Heart right ventricle (tissue), 16 donors: ENCODE measurements at regions of chr1 and their contacts with region 1.

Region 1: DNA sequence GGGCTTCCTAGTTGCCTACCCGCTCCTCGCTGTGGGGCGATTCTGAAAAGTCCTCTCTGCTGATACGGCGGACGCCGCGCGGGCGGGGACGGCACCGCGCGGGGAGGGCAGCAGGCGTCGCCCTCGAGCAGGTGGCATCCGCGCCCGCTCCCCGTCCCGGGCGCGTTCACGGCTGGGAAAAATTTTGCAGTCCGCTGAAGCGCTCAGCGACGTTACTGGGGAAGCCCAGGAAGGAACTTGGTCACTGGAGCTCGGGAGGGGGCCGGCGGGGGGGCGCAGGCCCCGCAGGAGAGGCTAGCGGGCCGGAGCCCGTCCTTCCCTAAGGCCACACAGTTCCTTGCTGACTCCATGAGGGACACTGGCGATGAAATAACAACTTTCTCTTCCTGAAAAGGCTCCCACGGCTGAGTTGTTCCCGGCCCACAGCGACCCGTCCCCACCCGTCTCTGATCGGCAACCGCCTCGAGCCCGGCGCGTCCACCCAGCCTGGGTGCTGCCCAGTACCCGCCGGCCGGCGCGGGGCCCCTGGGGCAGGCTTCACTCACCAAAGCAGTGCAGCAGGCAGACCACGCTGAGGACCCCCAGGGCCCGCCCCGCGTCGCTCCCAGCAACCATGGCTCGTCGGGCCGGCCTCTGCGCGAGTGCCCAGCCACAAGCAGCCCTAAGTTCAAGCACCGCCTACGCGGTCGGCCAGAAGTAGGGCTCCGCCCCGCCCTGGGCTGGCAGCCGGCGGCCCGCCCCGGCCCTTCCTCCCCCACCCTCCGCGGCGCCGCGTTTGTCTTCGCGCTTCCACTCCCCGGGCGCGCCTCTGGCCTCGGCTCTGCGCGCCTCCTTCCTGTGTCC is at the start of gene CD58:
- DNase-seq: peak; percentile 92 to 93
- ATAC-seq: peak; percentile 92 to 96 (median 92)
- H3K4me3 ChIP-seq: peak within 1 kb of the TSS; percentile 67 to 97 (median 88)
- H3K27ac ChIP-seq: peak within 1 kb of the TSS; percentile 91 to 100 (median 98)
- H3K4me1 ChIP-seq: peaks cover 15 to 81% (median 61%) of the 10 kb centered on the region in 9 donors
- H3K27me3 ChIP-seq: no peaks in the 10 kb centered on the region
- CTCF ChIP-seq: peak; percentile 57 to 85 (median 70)
- total RNA-seq, gene CD58: 17.2 to 41.1 (median 26.5) TPM

Region 2: DNA sequence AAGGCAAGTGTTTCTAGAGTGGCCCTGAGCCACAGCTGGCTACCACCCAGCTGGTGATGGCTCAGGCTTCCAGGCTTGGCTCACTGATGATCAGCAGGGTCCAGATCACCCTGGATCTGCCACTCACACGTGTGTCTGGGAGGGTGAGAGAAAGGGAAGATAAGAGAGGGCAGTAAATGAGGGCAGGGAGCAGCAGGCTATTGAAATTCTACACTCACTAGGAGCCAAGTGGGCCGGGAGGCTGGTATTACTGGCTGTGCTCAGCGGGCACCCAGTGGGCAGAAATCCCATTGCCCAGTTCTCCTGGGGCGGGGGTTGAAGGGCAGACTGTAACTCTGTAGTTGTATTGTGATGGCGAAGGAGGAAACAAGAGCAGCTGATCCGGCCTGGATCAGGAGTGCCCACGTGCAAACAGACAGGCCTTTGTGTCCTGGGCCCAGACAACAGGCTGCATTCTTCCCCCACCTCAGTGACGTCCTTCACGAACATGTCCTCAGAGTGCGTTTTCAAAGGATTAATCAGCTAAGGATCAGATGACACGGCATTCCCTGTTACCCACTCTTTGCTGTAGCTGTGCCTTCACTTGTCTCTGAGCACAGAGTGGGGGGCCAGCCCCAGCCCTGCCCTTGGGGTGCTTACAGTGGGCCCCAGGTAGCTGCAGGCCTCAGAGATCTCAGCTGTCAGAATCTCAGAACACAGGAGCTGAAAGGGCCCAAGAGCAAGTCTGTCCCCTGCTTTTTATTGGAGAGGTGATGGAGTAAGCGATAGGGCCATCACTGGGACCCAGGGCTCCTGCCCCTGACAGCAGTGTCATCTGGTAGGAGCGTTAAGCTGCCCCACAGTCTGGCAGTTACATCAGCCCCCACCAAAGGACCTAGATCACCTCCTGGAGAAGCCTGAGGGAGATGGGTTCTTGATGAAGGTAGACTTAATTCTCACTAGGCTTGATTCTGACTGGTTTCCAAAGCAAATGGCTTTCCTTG is 137.0 kb before region 1 on chr1:
- intact Hi-C with region 1: no loop called
- DNase-seq: peak; percentile 66 to 69
- ATAC-seq: peak; percentile 82 to 95 (median 88)
- H3K4me3 ChIP-seq: no peak overlapping the region
- H3K27ac ChIP-seq: peak overlapping the region; percentile 23 to 86 (median 74)
- H3K4me1 ChIP-seq: peaks cover 0 to 25% (median 12%) of the 10 kb centered on the region in 9 donors
- H3K27me3 ChIP-seq: no peaks in the 10 kb centered on the region
- CTCF ChIP-seq: no peak

Region 3: DNA sequence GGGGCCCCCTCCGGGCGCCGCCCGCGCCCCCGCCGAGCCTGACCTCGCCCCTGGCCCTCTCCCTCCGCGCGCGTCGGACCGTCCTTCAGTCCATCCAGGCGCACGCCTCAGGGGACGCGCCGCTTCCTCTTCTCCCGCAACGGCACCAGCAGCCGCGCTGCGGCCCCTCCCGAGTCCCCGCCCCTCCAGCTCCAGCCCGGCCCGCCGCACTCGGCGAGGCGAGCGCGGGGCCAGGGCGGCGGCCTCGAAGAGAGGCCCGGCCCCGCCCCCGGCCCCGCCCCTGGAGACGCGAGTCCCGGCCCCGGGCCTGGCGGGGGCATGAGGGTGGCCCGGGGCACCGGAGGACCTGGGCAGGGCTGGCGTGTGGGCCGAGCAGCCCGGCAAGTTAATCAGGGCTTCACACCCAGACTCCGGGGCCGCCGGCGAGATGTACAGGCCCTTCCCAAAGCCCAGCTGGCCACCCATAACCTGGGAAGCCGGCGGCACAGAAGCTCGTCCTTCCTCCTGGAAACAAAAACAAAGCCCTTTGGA is 97.1 kb after region 1 on chr1 and contains the start of gene IGSF3:
- intact Hi-C with region 1: loop called in 9 of 10 experiments (anchors 2 to 10 kb)
- DNase-seq: peak; percentile 65 to 86
- ATAC-seq: peak; percentile 65 to 93 (median 85)
- H3K4me3 ChIP-seq: peak within 1 kb of the TSS; percentile 49 to 88 (median 71)
- H3K27ac ChIP-seq: peak within 1 kb of the TSS in 8 of 10 donors; percentile 25 to 65 (median 54)
- H3K4me1 ChIP-seq: peaks cover 0 to 21% (median 13%) of the 10 kb centered on the region in 9 donors
- H3K27me3 ChIP-seq: peaks cover 0 to 54% (median 0%) of the 10 kb centered on the region in 7 donors
- CTCF ChIP-seq: no peak
- total RNA-seq, gene IGSF3: 8.8 to 21.2 (median 14.9) TPM

Region 4: GRCh38 chr1:116679091-116679827 is 108.7 kb after region 1 on chr1:
- intact Hi-C with region 1: loop called in 6 of 10 experiments (anchors 5 to 10 kb)
- DNase-seq: no peak
- ATAC-seq: no peak
- H3K4me3 ChIP-seq: no peak overlapping the region
- H3K27ac ChIP-seq: no peak overlapping the region
- H3K4me1 ChIP-seq: no peaks in the 10 kb centered on the region
- H3K27me3 ChIP-seq: peaks cover 0 to 10% (median 0%) of the 10 kb centered on the region in 7 donors
- CTCF ChIP-seq: no peak

Region 5: GRCh38 chr1:117026361-117026760 is 455.8 kb after region 1 on chr1:
- intact Hi-C with region 1: no loop called
- DNase-seq: no peak
- ATAC-seq: peak in 2 of 8 donors; percentile 35 to 67
- H3K4me3 ChIP-seq: no peak overlapping the region
- H3K27ac ChIP-seq: peak overlapping the region in 1 of 10 donors; percentile 19
- H3K4me1 ChIP-seq: peaks cover 0 to 14% (median 4%) of the 10 kb centered on the region in 9 donors
- H3K27me3 ChIP-seq: no peaks in the 10 kb centered on the region
- CTCF ChIP-seq: no peak

Region 6: DNA sequence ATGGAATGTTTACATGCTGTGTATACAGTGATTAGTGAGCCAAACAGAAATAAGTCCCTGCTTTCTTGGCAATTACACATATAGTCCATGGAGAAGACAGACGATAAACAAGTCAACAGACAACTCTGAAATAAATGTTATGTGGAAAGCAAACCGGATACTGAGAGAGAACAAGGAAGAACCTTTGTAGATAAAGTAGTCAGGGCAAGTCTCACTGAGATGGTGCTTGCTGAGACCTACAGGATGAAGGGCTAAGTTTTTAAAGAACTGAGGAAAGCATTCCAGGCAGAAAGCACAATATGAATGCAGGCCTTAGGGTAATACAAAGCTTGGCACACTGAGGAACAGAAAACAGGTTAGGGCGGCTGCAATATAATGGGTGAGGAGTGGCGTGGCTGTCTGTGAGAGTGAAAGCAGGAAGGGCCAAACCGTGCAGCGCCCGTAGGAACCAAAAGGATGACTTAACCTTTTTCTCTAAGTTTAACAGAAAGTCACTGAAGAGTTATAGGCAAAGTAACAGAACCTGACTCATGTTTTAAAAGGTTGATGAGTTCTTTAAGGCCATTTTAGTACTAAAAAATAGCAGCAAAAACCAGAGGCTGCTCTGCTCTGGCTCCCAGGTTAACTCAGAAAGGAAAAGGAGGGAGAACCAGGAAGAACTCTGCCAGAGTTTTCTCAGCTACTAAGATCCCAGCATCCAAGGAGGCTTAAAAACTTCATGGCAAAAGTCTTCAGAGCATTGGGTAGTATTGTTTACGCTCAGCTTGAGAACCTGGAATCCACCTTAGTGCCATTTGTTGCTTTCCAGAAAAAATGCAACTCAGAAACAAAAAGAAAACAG is 480.9 kb after region 1 on chr1:
- intact Hi-C with region 1: loop called in 8 of 10 experiments (anchors 5 to 10 kb)
- DNase-seq: no peak
- ATAC-seq: peak in 3 of 8 donors; percentile 35 to 50 (median 50)
- H3K4me3 ChIP-seq: peak overlapping the region in 4 of 10 donors; percentile 7 to 27 (median 17)
- H3K27ac ChIP-seq: peak overlapping the region in 3 of 10 donors; percentile 55 to 75 (median 63)
- H3K4me1 ChIP-seq: peaks cover 0 to 38% (median 0%) of the 10 kb centered on the region in 9 donors
- H3K27me3 ChIP-seq: no peaks in the 10 kb centered on the region
- CTCF ChIP-seq: no peak

Region 7: GRCh38 chr1:117121776-117122697 is 551.5 kb after region 1 on chr1:
- intact Hi-C with region 1: loop called in 1 of 10 experiments (anchors 5 kb)
- DNase-seq: peak; percentile 96 to 98
- ATAC-seq: peak; percentile 97 to 99 (median 98)
- H3K4me3 ChIP-seq: peak overlapping the region; percentile 46 to 89 (median 72)
- H3K27ac ChIP-seq: peak overlapping the region; percentile 80 to 97 (median 93)
- H3K4me1 ChIP-seq: peaks cover 0 to 43% (median 24%) of the 10 kb centered on the region in 9 donors
- H3K27me3 ChIP-seq: no peaks in the 10 kb centered on the region
- CTCF ChIP-seq: peak; percentile 55 to 98 (median 79)